ENCODE measurements at regions of chr9 and their contacts with region 1.

Region 1: DNA sequence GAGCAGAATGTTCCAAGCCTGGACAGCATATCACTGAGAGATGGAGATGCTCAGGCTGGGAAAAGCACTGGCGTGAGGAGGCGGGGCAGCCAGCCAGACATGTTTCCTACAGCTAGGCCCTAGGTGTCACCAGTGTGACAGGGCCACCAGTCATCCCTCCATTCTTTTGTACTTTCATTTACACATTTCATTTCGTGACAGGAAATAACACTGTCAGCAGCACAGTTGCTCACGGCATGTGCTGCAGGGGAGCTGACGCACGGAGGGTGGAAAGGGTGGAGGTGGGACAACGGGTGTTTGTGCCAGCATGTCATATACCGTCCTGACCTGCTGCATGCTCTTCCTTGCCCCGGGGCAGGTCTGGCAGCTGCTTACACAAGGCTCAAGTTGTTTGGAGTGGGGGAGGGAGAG is 14.8 kb upstream of the CEMIP2 start:
- DNase-seq: peak; percentile 91
- H3K4me3 Mint-ChIP-seq: peak overlapping the region; percentile 54
- H3K27ac Mint-ChIP-seq: peak overlapping the region; percentile 99
- H3K4me1 Mint-ChIP-seq: peaks cover 48% of the 10 kb centered on the region
- H3K27me3 Mint-ChIP-seq: no peaks in the 10 kb centered on the region

Region 2: DNA sequence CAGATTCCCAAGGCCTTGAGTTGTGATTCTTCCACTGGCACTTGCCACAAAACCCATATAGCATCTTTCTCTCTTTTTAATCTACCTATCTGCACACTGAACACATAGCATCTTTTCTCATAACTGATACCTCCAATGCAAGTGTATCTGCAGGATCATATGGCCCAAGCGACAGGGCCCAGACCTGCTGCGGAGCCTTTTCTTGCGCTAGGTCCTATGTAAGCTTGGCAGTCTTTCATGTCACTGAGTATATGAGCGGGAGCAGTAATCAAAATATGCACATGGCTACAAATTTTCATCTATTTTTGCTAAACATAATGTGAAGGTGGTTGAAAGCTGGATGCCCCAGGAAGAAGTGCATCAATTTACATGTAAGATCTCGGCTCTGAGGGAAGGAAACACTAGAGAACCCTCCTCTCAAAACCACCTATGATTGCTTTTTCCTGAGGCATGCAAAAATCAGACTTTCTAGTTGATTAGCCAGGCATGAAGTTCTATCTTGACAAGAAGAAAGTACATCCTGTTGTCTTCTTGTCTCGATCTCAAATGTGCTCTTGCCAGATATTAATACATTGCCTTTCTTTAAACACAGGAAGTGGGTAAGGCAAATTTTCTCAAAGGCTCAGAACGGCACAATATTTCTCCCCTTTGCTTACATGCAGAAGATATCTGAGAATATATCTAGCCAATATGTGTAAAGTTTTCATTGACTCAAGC is 12.1 kb after region 1 on chr9:
- CTCF ChIA-PET with region 1: interaction called, 29 read pairs
- DNase-seq: no peak
- H3K4me3 Mint-ChIP-seq: peak overlapping the region; percentile 46
- H3K27ac Mint-ChIP-seq: peak overlapping the region; percentile 98
- H3K4me1 Mint-ChIP-seq: peaks cover 59% of the 10 kb centered on the region
- H3K27me3 Mint-ChIP-seq: no peaks in the 10 kb centered on the region

Region 3: GRCh38 chr9:71806901-71807307 is 23.8 kb after region 1 on chr9:
- CTCF ChIA-PET with region 1: interaction called, 32 read pairs
- DNase-seq: peak; percentile 74
- H3K4me3 Mint-ChIP-seq: no peak overlapping the region
- H3K27ac Mint-ChIP-seq: no peak overlapping the region
- H3K4me1 Mint-ChIP-seq: peaks cover 6% of the 10 kb centered on the region
- H3K27me3 Mint-ChIP-seq: peaks cover 5% of the 10 kb centered on the region

Region 4: DNA sequence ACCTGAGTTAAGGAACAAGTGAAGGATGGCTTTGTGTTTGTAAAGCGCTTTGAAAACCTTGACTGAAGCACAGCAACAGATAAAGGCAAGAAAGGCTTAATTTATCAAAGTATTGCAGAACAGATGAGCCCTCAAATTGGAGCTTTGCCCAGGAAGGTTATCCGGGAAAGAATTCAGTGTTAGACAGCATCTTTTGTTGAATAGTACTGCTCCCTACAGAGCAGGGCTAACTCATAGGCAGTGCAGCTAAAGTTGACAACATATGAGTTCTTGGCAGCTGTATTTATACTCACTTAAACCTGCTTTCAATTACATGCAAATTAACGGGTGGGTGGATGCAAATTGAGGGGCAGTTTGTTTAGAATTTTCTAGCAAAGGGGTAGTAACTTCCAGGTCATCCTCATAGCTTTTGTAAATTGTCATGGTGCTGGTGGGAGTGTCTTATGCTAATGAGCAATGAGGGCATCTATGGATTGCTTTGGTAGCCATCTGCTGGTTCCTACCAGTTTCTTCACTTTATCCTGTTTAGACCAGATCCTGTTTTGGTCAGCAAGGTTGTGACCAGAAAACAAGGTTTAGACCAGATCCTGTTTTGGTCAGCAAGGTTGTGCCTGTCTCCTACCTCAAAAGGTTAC is 471.9 kb after region 1 on chr9:
- CTCF ChIA-PET with region 1: no interaction called
- DNase-seq: no peak
- H3K4me3 Mint-ChIP-seq: no peak overlapping the region
- H3K27ac Mint-ChIP-seq: no peak overlapping the region
- H3K4me1 Mint-ChIP-seq: no peaks in the 10 kb centered on the region
- H3K27me3 Mint-ChIP-seq: peaks cover 20% of the 10 kb centered on the region

Measured in activated naive CD4-positive, alpha-beta T cell treated with anti-CD3 and anti-CD28 coated beads, Interleukin-2, amount 10 ng/mL, durations not matched to agents 7 days and 5 days (primary cell).